A549 (cell line): ENCODE measurements at regions of chr2 and their contacts with region 1.

Region 1: DNA sequence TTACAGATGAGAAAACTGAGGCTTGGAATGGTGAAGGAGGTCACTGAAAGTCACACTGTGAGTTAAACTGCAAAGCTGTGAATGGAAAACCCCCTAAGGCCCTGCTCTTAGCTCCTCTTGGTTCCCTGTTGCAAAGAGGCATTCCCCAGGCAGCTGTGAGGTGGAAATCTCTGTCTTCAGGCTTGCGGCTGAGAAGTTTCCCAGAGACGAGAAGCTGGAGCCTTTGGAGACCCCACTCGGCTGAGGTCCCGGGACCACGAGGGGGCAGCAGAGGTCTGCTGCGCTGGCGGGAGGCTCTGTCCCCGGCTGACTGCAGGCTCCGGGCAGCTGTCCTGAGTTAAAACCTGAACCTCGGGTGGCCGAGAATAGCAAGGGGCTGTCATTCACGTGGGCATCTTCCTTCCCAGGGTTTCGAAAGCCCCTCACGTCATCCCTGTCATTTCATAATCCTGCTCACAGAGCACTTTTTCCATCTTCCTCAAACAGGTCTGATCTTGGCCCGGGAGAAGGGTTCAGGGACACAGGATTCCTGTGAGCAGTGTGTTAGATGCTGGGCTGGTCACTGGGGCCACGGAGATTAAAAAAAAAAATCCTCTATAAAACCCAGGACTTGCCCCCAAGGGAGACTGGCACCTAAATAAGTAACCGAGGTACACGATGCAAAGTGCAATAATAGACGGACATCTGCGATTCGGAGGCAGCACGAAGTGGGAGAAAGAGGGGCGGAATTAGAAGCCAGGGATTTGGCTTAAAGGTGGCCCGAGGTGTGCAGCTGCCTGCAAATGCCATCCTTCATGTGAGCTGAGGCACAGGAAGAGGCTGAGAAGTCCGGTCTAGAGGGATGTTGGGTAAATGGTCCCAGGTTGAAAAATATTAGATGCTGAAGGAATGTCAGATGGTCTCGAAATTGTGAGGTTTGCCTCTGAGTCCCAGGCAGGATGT is 24.6 kb upstream of the ATOH8 start:
- DNase-seq: peak; percentile 83 to 93
- ATAC-seq: peak; percentile 96 to 99
- H3K4me3 ChIP-seq: 0 out of 3 replicates have a peak overlapping the region, but pooled peaks have one; percentile 11
- H3K27ac ChIP-seq: peak overlapping the region; percentile 68 to 70
- H3K4me1 ChIP-seq: peaks cover 24% of the 10 kb centered on the region
- CTCF ChIP-seq: peak; percentile 99
- EP300 ChIP-seq: peak in 1 of 2 experiments; percentile 51; a peak in 1 of 5 replicates
- POLR2A ChIP-seq: no peak
- RAD21 ChIP-seq: peak; percentile 100

Region 2: DNA sequence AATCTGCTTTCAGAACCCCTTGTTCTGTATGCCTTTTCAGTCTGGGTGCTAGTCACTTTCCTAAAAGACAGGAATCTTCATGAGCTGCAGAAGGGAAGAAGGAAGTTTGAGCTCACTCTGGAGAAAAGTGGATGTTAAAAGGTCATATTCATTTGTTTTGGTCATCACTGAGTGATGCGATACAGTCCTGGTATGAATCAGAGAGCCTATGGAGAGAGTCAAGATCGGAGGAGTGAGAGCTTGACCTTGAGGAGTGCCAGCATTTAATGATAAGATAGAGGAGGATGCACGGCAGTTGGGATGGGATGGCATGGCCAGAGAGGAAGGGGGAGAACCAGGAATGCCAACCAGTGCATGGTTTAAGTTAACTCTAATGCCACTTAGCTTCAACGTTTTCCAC is 93.5 kb before region 1 on chr2:
- CTCF ChIA-PET with region 1: interaction called, 38 read pairs
- POLR2A ChIA-PET with region 1: interaction called, 3 read pairs
- DNase-seq: no peak
- ATAC-seq: no peak
- H3K4me3 ChIP-seq: no peak overlapping the region
- H3K27ac ChIP-seq: no peak overlapping the region
- H3K4me1 ChIP-seq: peaks cover 3% of the 10 kb centered on the region; the same call in 1 of the 3 replicates
- CTCF ChIP-seq: no peak
- EP300 ChIP-seq: no peak
- POLR2A ChIP-seq: no peak
- RAD21 ChIP-seq: no peak

Region 3: DNA sequence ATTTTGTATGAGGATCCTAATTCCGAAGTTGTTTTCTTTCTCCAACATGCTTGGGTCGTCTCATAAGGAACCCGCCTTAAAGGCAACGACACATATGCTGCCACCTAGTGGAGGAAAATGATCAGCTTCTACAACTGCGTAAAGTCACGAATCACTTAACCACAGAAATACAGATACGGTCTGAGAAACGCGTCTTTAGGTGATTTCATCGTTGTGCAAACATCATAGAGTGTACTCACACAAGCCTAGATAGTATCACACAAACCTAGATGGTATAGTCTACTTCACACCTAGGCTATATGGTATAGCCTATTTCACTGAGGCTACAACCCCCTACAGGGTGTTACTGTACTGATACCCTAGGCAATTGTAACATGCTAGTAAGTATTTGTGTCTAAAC is 21.9 kb before region 1 on chr2:
- CTCF ChIA-PET with region 1: interaction called, 122 read pairs
- POLR2A ChIA-PET with region 1: no interaction called
- DNase-seq: peak; percentile 92 to 96
- ATAC-seq: peak; percentile 82 to 94
- H3K4me3 ChIP-seq: no peak overlapping the region
- H3K27ac ChIP-seq: peak overlapping the region; percentile 84; a peak in 5 of 6 replicates
- H3K4me1 ChIP-seq: peaks cover 56% of the 10 kb centered on the region
- CTCF ChIP-seq: peak; percentile 98
- EP300 ChIP-seq: no peak
- POLR2A ChIP-seq: no peak
- RAD21 ChIP-seq: peak; percentile 86 to 89

Region 4: DNA sequence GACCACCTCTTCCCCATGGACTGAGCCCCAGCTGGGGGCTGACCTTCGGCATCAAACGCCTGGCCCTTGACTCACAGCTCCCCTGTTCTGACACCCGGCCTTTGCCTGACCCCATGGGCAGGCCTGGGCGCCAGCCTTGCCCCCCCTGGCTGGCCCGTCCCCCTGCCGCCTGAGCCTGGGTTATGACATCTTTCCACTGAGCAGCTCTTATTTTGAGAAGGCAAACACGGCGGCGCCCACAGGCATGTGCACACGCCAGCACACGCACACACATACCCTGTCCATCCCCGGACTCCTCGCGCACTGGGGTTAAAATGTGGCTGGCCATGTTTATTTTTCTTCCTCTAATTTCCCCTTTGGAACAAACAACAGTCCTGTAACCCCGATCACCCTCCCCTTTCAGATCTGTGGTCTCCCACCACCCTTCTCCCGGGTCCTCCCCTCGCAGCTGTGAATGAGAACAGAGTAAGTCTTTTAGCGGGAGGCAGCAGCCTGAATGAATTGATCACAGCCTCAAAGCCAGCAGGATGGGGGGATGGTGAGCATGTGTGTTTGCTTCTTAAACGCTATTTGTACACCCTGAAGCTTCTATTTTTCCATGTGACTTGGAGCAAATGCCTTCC is 12.8 kb after region 1 on chr2:
- CTCF ChIA-PET with region 1: interaction called, 139 read pairs
- POLR2A ChIA-PET with region 1: interaction called, 13 read pairs
- DNase-seq: peak; percentile 73 to 92
- ATAC-seq: peak; percentile 81 to 86
- H3K4me3 ChIP-seq: peak overlapping the region; percentile 21; the same call in 2 of the 3 replicates
- H3K27ac ChIP-seq: peak overlapping the region; percentile 93 to 97
- H3K4me1 ChIP-seq: peaks cover 60% of the 10 kb centered on the region
- CTCF ChIP-seq: no peak
- EP300 ChIP-seq: peak; percentile 45 to 89; a peak in 3 of 5 replicates
- POLR2A ChIP-seq: no peak
- RAD21 ChIP-seq: peak in 1 of 2 experiments; percentile 43; a peak in 3 of 5 replicates

Region 5: DNA sequence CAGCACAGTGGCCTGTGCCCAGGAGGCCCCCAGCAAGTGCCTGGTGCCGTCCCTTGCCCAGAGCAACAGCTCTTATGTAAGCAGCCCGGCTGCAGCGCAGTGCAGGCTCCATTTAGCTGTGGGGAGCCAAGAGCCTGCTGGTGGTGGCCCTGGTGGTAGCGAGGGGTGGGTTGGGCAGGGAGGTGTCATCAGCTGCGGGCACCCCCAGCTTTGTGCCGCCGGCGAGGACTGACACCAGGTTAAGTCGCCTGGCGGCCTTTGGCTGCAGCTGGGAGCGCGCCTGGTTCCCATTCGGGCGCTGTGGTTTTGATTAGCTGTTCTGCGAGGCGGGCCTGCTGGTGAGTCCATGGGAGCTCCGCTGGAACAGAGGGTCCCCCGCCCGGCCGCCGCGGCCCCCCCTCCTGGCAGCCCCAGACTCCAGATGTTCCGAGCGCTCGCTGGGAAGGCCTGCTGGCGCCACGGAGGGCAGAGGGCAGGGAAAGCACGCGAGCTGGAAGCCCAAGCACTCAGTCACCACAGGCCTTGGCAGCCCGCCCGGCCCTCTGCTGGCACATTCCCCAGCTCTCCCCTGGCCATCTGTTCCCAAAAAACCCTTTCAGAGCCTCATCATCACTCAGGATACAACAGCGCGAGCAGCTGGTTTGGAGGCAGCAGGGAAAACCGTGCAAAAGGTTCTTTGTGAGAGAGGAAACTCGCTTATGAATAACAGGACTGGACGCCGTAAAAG is 43.0 kb after region 1 on chr2:
- CTCF ChIA-PET with region 1: interaction called, 60 read pairs
- POLR2A ChIA-PET with region 1: no interaction called
- DNase-seq: peak; percentile 90
- ATAC-seq: peak; percentile 85 to 87
- H3K4me3 ChIP-seq: peak overlapping the region; percentile 13; the same call in 1 of the 3 replicates
- H3K27ac ChIP-seq: peak overlapping the region; percentile 82 to 88
- H3K4me1 ChIP-seq: peaks cover 66% of the 10 kb centered on the region
- CTCF ChIP-seq: peak; percentile 38; the same call in 2 of the 3 replicates
- EP300 ChIP-seq: peak in 1 of 2 experiments; percentile 83; a peak in 2 of 5 replicates
- POLR2A ChIP-seq: no peak
- RAD21 ChIP-seq: peak; percentile 51 to 63

Region 6: DNA sequence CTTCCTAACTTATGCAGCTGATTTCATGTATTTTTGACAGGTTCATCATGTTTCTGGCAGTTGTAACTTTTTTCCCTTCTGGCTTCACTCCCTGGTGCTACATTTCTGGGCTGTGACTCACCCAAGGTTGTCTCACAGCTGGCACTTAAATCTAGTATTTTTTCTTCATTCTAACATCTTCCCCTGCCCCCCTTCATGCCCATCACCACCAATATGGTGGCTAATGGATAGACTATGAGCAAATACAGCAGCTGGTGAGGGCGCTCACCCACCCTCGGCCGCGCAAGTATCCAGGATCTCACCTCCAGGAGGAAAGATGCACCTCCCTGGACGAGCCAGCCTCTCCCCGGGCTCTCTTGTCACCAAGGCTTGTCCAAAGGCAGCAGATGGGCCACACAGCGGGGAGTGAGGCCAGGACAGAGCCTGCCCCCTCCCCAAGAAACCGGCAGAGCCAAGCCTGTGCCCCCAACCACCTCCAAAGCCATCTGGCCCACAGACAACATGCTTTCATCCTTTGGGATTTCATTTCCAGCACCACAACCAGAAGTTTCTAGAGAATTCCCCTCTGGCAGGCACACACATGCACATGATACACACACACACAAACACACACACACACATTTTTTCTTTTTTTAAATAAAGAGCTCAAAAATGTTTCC is 63.8 kb after region 1 on chr2:
- CTCF ChIA-PET with region 1: interaction called, 19 read pairs
- POLR2A ChIA-PET with region 1: no interaction called
- DNase-seq: peak; percentile 38 to 48
- ATAC-seq: peak in 1 of 2 experiments; percentile 2; a peak in 1 of 6 replicates
- H3K4me3 ChIP-seq: no peak overlapping the region
- H3K27ac ChIP-seq: peak overlapping the region; percentile 10 to 79; a peak in 5 of 6 replicates
- H3K4me1 ChIP-seq: peaks cover 44% of the 10 kb centered on the region
- CTCF ChIP-seq: no peak
- EP300 ChIP-seq: no peak
- POLR2A ChIP-seq: no peak
- RAD21 ChIP-seq: no peak

Region 7: DNA sequence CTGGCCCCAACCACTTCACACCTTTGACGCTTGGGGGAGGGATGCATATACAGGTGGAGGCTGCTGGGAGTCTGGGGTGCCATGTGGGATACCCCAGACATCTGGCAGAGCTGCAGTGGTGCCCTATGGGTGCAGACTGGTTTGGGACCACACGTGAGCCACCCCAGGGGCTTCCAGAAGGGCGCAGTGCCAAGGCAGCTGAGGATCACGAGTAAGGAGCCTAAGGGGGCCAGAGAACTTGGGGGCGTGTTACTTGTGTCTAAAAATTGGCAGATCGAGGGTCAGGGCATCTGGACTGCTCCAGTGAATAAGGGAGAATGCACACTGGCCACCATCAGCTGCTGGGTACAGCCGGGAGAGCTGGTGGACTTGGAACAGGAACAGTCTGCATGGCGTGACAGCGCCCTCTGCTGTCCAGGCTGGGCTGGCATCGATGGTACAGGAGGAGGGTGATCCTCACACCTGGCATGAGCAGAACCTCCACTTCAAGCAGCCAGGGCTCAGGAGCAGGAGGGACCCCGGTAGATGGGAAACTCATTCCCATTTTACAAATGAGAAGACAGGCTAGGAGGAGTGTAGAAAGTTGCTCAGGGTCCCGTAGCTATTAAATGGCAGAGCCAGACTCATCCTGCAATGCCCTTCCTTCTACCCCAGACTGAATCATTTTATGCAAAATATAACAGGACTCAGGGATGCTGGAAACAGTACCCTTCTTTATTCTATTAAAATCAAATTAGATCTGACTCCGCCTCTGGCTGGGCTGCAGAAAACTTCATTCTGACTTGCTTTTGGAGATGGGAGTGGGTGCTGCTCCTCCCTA is 85.0 kb after region 1 on chr2:
- CTCF ChIA-PET with region 1: interaction called, 1,675 read pairs
- POLR2A ChIA-PET with region 1: interaction called, 3 read pairs
- DNase-seq: peak; percentile 91 to 93
- ATAC-seq: peak; percentile 97 to 99
- H3K4me3 ChIP-seq: no peak overlapping the region
- H3K27ac ChIP-seq: peak overlapping the region; percentile 52 to 71
- H3K4me1 ChIP-seq: peaks cover 24% of the 10 kb centered on the region
- CTCF ChIP-seq: peak; percentile 98
- EP300 ChIP-seq: no peak
- POLR2A ChIP-seq: no peak
- RAD21 ChIP-seq: peak; percentile 100